ENCODE measurements at regions of chr1 and their contacts with region 1.

Region 1: DNA sequence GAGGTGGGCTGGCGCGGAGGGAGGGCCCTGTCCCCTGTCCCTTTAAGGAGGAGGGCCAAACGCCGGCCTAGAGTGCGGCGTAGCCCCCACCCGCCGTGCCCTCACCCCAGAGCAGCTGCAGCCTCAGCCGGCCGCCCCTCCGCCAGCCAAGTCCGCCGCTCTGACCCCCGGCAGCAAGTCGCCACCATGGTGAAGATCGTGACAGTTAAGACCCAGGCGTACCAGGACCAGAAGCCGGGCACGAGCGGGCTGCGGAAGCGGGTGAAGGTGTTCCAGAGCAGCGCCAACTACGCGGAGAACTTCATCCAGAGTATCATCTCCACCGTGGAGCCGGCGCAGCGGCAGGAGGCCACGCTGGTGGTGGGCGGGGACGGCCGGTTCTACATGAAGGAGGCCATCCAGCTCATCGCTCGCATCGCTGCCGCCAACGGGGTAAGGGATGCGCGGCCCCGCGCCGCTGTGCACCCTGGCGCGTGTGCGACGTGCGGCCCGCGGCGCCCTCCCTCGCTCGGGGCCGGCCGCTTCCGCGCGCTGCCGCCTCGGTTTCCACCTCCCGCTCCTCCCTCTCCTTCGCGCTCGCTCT is at the start of gene PGM1:
- DNase-seq: peak; percentile 82
- H3K4me3 Mint-ChIP-seq: peak within 1 kb of the TSS; percentile 99
- H3K27ac Mint-ChIP-seq: peak within 1 kb of the TSS; percentile 99
- H3K4me1 Mint-ChIP-seq: peaks cover 36% of the 10 kb centered on the region
- H3K27me3 Mint-ChIP-seq: no peaks in the 10 kb centered on the region
- total RNA-seq, gene PGM1: 32.8 to 34.5 TPM

Region 2: GRCh38 chr1:63522891-63523728 is 70.3 kb before region 1 on chr1 and contains the starts of genes EFCAB7 and ITGB3BP:
- CTCF ChIA-PET with region 1: no interaction called
- POLR2A ChIA-PET with region 1: interaction called, 13 read pairs
- DNase-seq: peak; percentile 86
- H3K4me3 Mint-ChIP-seq: peak within 1 kb of the TSS; percentile 99
- H3K27ac Mint-ChIP-seq: peak within 1 kb of the TSS; percentile 97
- H3K4me1 Mint-ChIP-seq: peaks cover 41% of the 10 kb centered on the region
- H3K27me3 Mint-ChIP-seq: no peaks in the 10 kb centered on the region
- total RNA-seq, gene EFCAB7: 6.7 to 6.8 TPM
- total RNA-seq, gene ITGB3BP: 44.9 to 46.2 TPM

Region 3: DNA sequence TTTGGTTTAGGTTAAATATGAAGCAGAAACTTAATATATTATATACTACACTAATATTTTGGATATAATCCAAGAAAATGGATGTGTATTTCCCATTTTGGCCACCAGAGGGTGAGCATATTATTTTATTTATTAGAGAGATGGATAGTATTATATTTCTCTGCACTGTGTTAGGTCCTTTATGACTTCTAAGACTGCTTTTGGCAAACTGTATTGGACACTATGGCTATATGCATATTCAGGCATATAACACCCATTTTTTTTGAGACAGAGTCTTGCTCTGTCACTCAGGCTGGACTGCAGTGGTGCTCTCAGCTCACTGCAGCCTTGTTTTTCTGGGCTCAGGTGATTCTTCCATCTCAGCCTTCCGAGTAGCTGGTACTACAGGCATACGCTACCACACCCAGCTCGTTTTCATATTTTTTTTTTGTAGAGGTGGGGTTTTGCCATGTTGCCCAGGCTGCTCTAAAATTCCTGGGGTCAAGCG is 18.0 kb before region 1 on chr1:
- CTCF ChIA-PET with region 1: interaction called, 5 read pairs
- POLR2A ChIA-PET with region 1: interaction called, 12 read pairs
- DNase-seq: no peak
- H3K4me3 Mint-ChIP-seq: no peak overlapping the region
- H3K27ac Mint-ChIP-seq: no peak overlapping the region
- H3K4me1 Mint-ChIP-seq: no peaks in the 10 kb centered on the region
- H3K27me3 Mint-ChIP-seq: no peaks in the 10 kb centered on the region

Region 4: GRCh38 chr1:63651161-63651701 is 57.8 kb after region 1 on chr1:
- CTCF ChIA-PET with region 1: no interaction called
- POLR2A ChIA-PET with region 1: interaction called, 24 read pairs
- DNase-seq: peak; percentile 36
- H3K4me3 Mint-ChIP-seq: peak overlapping the region; percentile 57
- H3K27ac Mint-ChIP-seq: peak overlapping the region; percentile 97
- H3K4me1 Mint-ChIP-seq: peaks cover 36% of the 10 kb centered on the region
- H3K27me3 Mint-ChIP-seq: no peaks in the 10 kb centered on the region

Measured in activated CD4-positive, alpha-beta memory T cell treated with anti-CD3 and anti-CD28 coated beads, Interleukin-2, amount 10 ng/mL, durations not matched to agents 7 days and 5 days (primary cell).